ENCODE measurements at regions of chr7 and their contacts with region 1.

Region 1: GRCh38 chr7:138565451-138566114 is 105.5 kb downstream of the TRIM24 start:
- DNase-seq: peak; percentile 98
- ATAC-seq: peak; percentile 82
- H3K4me3 ChIP-seq: 0 out of 6 replicates have a peak overlapping the region, but pooled peaks of 1 of the 3 experiments have one; percentile 34
- H3K27ac ChIP-seq: peak overlapping the region; percentile 92
- H3K4me1 ChIP-seq: peaks cover 70% of the 10 kb centered on the region
- H3K27me3 ChIP-seq: no peaks in the 10 kb centered on the region
- CTCF ChIP-seq: no peak
- EP300 ChIP-seq: peak in 1 of 2 experiments; percentile 96; a peak in 2 of 4 replicates
- POLR2A ChIP-seq: no peak; a peak in 1 of 4 replicates
- RAD21 ChIP-seq: 0 out of 2 replicates have a peak, but pooled peaks have one; percentile 4

Region 2: GRCh38 chr7:138527746-138528223 is 37.8 kb before region 1 on chr7:
- CTCF ChIA-PET with region 1: no interaction called
- POLR2A ChIA-PET with region 1: no interaction called
- in situ Hi-C with region 1: no loop called
- intact Hi-C with region 1: no loop called
- DNase-seq: peak; percentile 25
- ATAC-seq: peak; percentile 62
- H3K4me3 ChIP-seq: no peak overlapping the region
- H3K27ac ChIP-seq: peak overlapping the region; percentile 26
- H3K4me1 ChIP-seq: no peaks in the 10 kb centered on the region
- H3K27me3 ChIP-seq: no peaks in the 10 kb centered on the region
- CTCF ChIP-seq: no peak
- EP300 ChIP-seq: no peak
- POLR2A ChIP-seq: no peak
- RAD21 ChIP-seq: no peak

Region 3: DNA sequence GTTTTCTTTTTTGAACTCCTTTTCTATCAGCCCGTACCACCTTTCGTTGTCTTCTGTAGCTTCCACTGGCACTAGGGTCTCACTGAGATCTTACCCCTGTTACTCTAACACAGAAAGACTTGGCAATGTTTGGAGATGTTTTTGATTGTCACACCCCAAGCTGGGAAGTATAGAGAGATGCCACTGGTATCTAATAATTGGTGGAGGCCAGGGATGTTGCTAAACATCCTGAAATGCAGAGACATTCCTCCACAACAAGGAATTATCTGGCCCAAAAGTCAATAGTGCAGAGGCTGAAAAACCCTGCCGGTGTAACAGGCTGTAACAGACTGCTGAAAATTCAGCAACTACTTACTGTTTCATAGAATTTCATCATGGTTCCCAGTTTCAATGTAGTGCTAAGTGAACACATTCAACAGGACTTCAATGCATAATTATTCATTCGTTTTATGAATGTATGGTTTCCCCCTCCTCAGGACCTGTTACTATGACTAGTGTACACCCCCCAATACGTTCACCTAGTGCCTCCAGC is 10.4 kb after region 1 on chr7:
- CTCF ChIA-PET with region 1: no interaction called
- POLR2A ChIA-PET with region 1: interaction called, 11 read pairs
- in situ Hi-C with region 1: no loop called
- intact Hi-C with region 1: no loop called
- DNase-seq: no peak
- ATAC-seq: peak; percentile 42
- H3K4me3 ChIP-seq: no peak overlapping the region
- H3K27ac ChIP-seq: no peak overlapping the region
- H3K4me1 ChIP-seq: 0 out of 2 replicates have a peak, but pooled peaks cover 8% of the 10 kb centered on the region
- H3K27me3 ChIP-seq: no peaks in the 10 kb centered on the region
- CTCF ChIP-seq: no peak
- EP300 ChIP-seq: no peak
- POLR2A ChIP-seq: no peak
- RAD21 ChIP-seq: no peak

Measured in HepG2 (cell line).